ENCODE measurements at regions of chr5 and their contacts with region 1.

Region 1: DNA sequence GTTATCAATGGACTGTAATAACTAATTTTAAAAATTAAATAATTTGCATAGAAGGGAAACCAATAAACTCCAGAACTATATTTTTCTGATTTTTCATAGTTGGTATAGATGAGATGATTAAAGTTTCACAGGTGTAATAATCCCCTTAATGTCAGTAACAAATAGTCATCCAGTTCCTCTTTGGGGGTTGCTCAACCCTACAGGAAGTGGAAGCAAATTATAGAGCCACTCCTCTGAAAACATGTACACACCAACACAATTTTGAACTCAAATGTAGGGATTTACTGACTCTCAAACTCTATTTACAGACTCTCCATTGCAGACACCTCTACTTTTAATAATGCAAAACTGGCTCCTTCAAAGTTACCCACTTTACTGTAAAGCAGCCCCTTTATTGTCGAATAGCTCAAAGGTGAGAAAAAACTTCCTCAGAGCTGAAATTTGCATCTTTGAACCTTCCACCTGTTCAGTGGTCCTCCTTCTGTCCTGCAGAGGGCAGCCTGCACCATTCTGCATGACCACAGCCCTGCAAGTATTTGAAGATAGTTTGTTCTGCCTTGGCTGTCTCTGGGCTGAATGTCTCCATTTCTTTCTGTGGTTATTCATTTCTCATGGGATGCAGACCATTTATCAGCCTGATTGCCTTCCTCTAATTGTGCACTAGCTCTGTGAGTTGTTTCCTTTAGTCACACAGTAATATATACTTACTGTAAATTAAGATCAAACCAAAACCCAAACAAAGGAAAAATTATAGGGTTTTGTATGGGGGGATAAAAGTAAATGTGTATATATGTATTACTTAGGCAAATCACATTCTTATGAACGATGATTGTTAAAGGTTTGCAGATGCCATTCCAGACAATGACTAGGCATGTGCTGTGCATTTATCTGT is 383.2 kb upstream of the SGCD start:
- DNase-seq: peak; percentile 73 to 77
- H3K4me3 ChIP-seq: no peak overlapping the region
- H3K4me3 Mint-ChIP-seq: peak overlapping the region; percentile 38
- H3K27ac Mint-ChIP-seq: peak overlapping the region; percentile 63
- H3K4me1 ChIP-seq: peaks cover 50% of the 10 kb centered on the region; the same call in 1 of the 2 replicates
- H3K4me1 Mint-ChIP-seq: peaks cover 31% of the 10 kb centered on the region
- H3K27me3 ChIP-seq: no peaks in the 10 kb centered on the region
- H3K27me3 Mint-ChIP-seq: no peaks in the 10 kb centered on the region
- CTCF ChIP-seq: peak; percentile 86 to 93

Region 2: DNA sequence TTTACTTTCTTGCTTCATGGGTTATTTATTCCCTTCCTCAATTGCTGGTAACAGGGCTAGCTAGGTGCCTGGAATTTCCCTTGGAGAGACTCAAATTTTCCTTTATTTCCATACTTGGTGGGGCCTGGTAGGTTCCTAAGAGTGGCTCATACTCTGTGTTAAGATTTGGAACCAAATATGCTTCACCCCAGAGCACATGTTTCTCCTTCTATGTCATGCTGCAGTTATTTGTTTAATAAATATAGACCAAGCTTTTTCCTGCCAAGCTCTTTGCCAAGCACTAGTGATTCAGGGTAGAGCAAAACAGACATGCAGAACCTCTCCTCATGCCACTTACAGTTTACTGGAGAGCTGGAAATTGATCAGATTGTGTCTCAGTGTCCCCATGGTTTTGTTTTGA is 92.9 kb after region 1 on chr5:
- CTCF ChIA-PET with region 1: no interaction called
- POLR2A ChIA-PET with region 1: no interaction called
- intact Hi-C with region 1: loop called (anchors 1 kb)
- DNase-seq: no peak
- H3K4me3 ChIP-seq: no peak overlapping the region
- H3K4me3 Mint-ChIP-seq: no peak overlapping the region
- H3K27ac Mint-ChIP-seq: no peak overlapping the region
- H3K4me1 ChIP-seq: peaks cover 26% of the 10 kb centered on the region
- H3K4me1 Mint-ChIP-seq: peaks cover 29% of the 10 kb centered on the region
- H3K27me3 ChIP-seq: no peaks in the 10 kb centered on the region
- H3K27me3 Mint-ChIP-seq: no peaks in the 10 kb centered on the region
- CTCF ChIP-seq: no peak

Region 3: GRCh38 chr5:156087577-156088110 is 143.9 kb after region 1 on chr5:
- CTCF ChIA-PET with region 1: no interaction called
- POLR2A ChIA-PET with region 1: no interaction called
- intact Hi-C with region 1: loop called (anchors 1 kb)
- DNase-seq: no peak
- H3K4me3 ChIP-seq: no peak overlapping the region
- H3K4me3 Mint-ChIP-seq: no peak overlapping the region
- H3K27ac Mint-ChIP-seq: no peak overlapping the region
- H3K4me1 ChIP-seq: no peaks in the 10 kb centered on the region
- H3K4me1 Mint-ChIP-seq: no peaks in the 10 kb centered on the region
- H3K27me3 ChIP-seq: no peaks in the 10 kb centered on the region
- H3K27me3 Mint-ChIP-seq: no peaks in the 10 kb centered on the region
- CTCF ChIP-seq: no peak

Region 4: DNA sequence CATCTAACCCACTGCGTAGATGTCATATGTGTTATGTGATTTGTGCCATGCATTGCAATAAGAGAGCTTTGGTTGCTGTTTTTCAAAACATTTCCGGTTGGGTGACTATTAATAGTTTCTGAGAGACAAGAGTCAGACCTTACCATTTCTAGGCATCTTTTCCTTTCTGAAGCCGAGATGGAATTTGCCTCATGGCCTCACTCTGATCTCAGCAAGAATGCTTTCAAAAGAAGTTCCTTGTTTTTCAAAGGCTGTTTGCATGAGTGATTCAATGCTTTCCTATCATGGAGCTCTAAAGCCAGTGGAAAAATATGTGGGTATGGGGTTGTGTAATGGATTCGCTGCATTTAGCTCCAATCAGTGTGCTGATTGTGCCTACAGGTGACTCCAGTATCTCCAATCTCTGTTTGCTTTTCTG is 703.3 kb after region 1 on chr5:
- CTCF ChIA-PET with region 1: interaction called, 3 read pairs
- POLR2A ChIA-PET with region 1: no interaction called
- intact Hi-C with region 1: loop called (anchors 1 kb)
- DNase-seq: peak; percentile 57 to 73
- H3K4me3 ChIP-seq: no peak overlapping the region
- H3K4me3 Mint-ChIP-seq: peak overlapping the region; percentile 34
- H3K27ac Mint-ChIP-seq: peak overlapping the region; percentile 74
- H3K4me1 ChIP-seq: peaks cover 30% of the 10 kb centered on the region
- H3K4me1 Mint-ChIP-seq: peaks cover 31% of the 10 kb centered on the region
- H3K27me3 ChIP-seq: no peaks in the 10 kb centered on the region
- H3K27me3 Mint-ChIP-seq: no peaks in the 10 kb centered on the region
- CTCF ChIP-seq: no peak

Region 5: DNA sequence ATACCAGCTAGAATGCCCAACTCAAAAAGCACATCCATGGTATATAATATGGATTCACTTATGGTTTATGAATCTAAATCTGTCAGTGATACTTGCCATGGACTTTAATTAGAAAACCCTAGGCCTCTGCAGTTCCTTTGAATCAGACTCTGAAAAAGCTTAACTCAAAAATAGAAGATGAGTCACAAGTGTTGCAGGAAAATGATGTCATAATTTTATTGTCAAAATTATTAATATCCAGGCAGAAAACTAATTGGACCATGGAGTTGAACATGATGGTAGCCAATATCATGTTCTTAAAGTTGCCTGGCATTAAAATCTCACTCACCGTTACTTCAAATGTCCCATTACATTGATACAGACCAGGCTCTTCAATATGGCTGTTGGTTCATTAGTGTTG is 796.1 kb after region 1 on chr5:
- CTCF ChIA-PET with region 1: interaction called, 3 read pairs
- POLR2A ChIA-PET with region 1: no interaction called
- intact Hi-C with region 1: loop called (anchors 1 kb)
- DNase-seq: no peak
- H3K4me3 ChIP-seq: no peak overlapping the region
- H3K4me3 Mint-ChIP-seq: no peak overlapping the region
- H3K27ac Mint-ChIP-seq: no peak overlapping the region
- H3K4me1 ChIP-seq: no peaks in the 10 kb centered on the region
- H3K4me1 Mint-ChIP-seq: no peaks in the 10 kb centered on the region
- H3K27me3 ChIP-seq: no peaks in the 10 kb centered on the region
- H3K27me3 Mint-ChIP-seq: no peaks in the 10 kb centered on the region
- CTCF ChIP-seq: no peak

Region 6: DNA sequence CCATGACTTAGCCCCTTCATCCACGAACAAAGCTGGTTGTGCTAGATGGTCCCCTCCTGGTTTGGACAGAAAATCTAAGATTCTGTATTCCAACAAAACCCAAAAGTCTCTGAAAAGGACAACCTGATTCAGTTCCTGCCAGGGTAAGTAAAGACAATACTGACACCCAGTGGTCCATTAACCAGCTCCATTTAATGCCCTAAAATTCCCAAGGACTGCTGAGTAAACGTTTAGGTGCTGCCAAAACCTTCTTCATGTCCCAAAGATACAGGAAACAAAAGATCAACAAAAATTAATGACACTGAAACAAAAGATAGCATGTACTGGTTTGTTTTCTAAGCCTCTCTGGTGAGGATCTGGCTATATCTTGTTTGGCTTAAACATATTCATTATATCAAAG is 881.0 kb after region 1 on chr5:
- CTCF ChIA-PET with region 1: no interaction called
- POLR2A ChIA-PET with region 1: no interaction called
- intact Hi-C with region 1: loop called (anchors 2 kb)
- DNase-seq: peak in 1 of 2 experiments; percentile 49
- H3K4me3 ChIP-seq: no peak overlapping the region
- H3K4me3 Mint-ChIP-seq: no peak overlapping the region
- H3K27ac Mint-ChIP-seq: no peak overlapping the region
- H3K4me1 ChIP-seq: 0 out of 2 replicates have a peak, but pooled peaks cover 9% of the 10 kb centered on the region
- H3K4me1 Mint-ChIP-seq: peaks cover 13% of the 10 kb centered on the region
- H3K27me3 ChIP-seq: no peaks in the 10 kb centered on the region
- H3K27me3 Mint-ChIP-seq: no peaks in the 10 kb centered on the region
- CTCF ChIP-seq: peak; percentile 44 to 55

Measured in Caco-2 (cell line).